H1 (cell line): ENCODE measurements at regions of chr1 and their contacts with region 1.

Region 1: DNA sequence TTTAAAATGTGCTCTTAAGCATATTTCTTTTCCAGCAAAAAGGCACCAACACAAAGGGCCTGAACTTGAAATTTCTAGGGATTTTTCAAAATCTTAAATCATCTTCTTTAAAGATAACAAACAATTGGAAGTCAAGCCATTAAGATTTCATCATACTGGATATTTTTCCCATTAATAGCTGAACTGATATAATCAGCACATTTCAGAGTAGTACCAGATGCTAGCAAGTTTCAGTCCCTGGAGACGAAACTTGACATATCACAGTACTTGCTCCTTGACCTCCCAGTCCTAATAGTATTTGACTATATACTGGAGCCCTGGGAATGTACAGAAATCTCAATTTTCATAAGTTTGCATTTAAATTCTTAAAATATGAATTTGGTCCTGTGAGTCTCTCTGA is 10.2 kb upstream of the CDC7 start:
- DNase-seq: no peak
- H3K4me3 ChIP-seq: no peak overlapping the region
- H3K27ac ChIP-seq: no peak overlapping the region
- H3K4me1 ChIP-seq: no peaks in the 10 kb centered on the region
- H3K27me3 ChIP-seq: no peaks in the 10 kb centered on the region
- CTCF ChIP-seq: no peak
- EP300 ChIP-seq: no peak
- POLR2A ChIP-seq: no peak
- RAD21 ChIP-seq: no peak

Region 2: DNA sequence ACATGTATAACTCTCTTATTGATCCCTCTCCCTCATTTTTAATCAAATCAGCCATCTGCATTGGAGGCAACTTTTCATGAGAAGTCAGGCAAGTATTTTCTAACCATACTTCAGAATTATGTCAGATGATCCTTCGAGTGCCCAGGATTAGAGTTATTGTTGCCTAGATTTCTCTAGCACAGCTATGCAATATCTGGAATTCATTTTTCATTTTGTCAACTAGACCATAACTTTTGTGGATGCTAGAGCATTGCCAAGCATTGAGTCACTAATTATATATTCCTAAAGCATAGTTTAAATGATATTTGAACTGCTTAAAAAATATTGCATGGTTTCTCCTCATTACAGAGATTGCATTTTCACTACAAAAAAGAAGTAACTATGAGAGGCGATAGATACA is 107.0 kb before region 1 on chr1:
- CTCF ChIA-PET with region 1: no interaction called
- POLR2A ChIA-PET with region 1: no interaction called
- DNase-seq: no peak
- H3K4me3 ChIP-seq: no peak overlapping the region
- H3K27ac ChIP-seq: no peak overlapping the region
- H3K4me1 ChIP-seq: no peaks in the 10 kb centered on the region
- H3K27me3 ChIP-seq: no peaks in the 10 kb centered on the region
- CTCF ChIP-seq: no peak
- EP300 ChIP-seq: no peak
- POLR2A ChIP-seq: no peak
- RAD21 ChIP-seq: no peak

Region 3: GRCh38 chr1:91500756-91501522 is 10.4 kb after region 1 on chr1 and contains the start of gene CDC7:
- CTCF ChIA-PET with region 1: interaction called, 3 read pairs
- POLR2A ChIA-PET with region 1: interaction called, 12 read pairs
- DNase-seq: peak; percentile 79 to 94
- H3K4me3 ChIP-seq: peak within 1 kb of the TSS; percentile 67 to 82 (median 76)
- H3K27ac ChIP-seq: peak within 1 kb of the TSS; percentile 99
- H3K4me1 ChIP-seq: peaks cover 2 to 14% (median 7%) of the 10 kb centered on the region in 4 experiments; a peak in 6 of 7 replicates
- H3K27me3 ChIP-seq: no peaks in the 10 kb centered on the region
- CTCF ChIP-seq: peak; percentile 35 to 61 (median 57)
- EP300 ChIP-seq: 0 out of 3 replicates have a peak, but pooled peaks of 1 of the 2 experiments have one; percentile 40
- POLR2A ChIP-seq: peak; percentile 90 to 95
- RAD21 ChIP-seq: peak in 1 of 2 experiments; percentile 54; a peak in 2 of 4 replicates
- total RNA-seq, gene CDC7: 34.4 and 36.4 TPM in 2 replicates

Region 4: GRCh38 chr1:91523482-91523881 is 33.0 kb after region 1 on chr1:
- CTCF ChIA-PET with region 1: no interaction called
- POLR2A ChIA-PET with region 1: no interaction called
- DNase-seq: no peak
- H3K4me3 ChIP-seq: no peak overlapping the region
- H3K27ac ChIP-seq: no peak overlapping the region
- H3K4me1 ChIP-seq: no peaks in the 10 kb centered on the region
- H3K27me3 ChIP-seq: no peaks in the 10 kb centered on the region
- CTCF ChIP-seq: no peak
- EP300 ChIP-seq: no peak
- POLR2A ChIP-seq: no peak
- RAD21 ChIP-seq: no peak